Esophagus muscularis mucosa (tissue), 4 donors: ENCODE measurements at regions of chr1 and their contacts with region 1.

Region 1: GRCh38 chr1:174982971-174983689 is 16.6 kb upstream of the CACYBP start:
- DNase-seq: no peak
- H3K4me3 ChIP-seq: no peak overlapping the region
- H3K27ac ChIP-seq: no peak overlapping the region
- H3K4me1 ChIP-seq: no peaks in the 10 kb centered on the region
- H3K27me3 ChIP-seq: no peaks in the 10 kb centered on the region
- CTCF ChIP-seq: peak; percentile 49 to 64 (median 52)
- EP300 ChIP-seq: no peak
- POLR2A ChIP-seq: no peak

Region 2: GRCh38 chr1:174769961-174770549 is 213.1 kb before region 1 on chr1:
- intact Hi-C with region 1: loop called (anchors 5 kb)
- DNase-seq: no peak
- H3K4me3 ChIP-seq: no peak overlapping the region
- H3K27ac ChIP-seq: no peak overlapping the region
- H3K4me1 ChIP-seq: no peaks in the 10 kb centered on the region
- H3K27me3 ChIP-seq: no peaks in the 10 kb centered on the region
- CTCF ChIP-seq: peak; percentile 53 to 62 (median 61)
- EP300 ChIP-seq: no peak
- POLR2A ChIP-seq: no peak

Region 3: GRCh38 chr1:174883409-174883808 is 99.7 kb before region 1 on chr1:
- intact Hi-C with region 1: loop called (anchors 10 kb)
- DNase-seq: no peak
- H3K4me3 ChIP-seq: no peak overlapping the region
- H3K27ac ChIP-seq: no peak overlapping the region
- H3K4me1 ChIP-seq: peaks cover 0 to 10% (median 0%) of the 10 kb centered on the region in 4 donors
- H3K27me3 ChIP-seq: no peaks in the 10 kb centered on the region
- CTCF ChIP-seq: no peak
- EP300 ChIP-seq: no peak
- POLR2A ChIP-seq: no peak

Region 4: GRCh38 chr1:175015243-175015642 is 32.1 kb after region 1 on chr1:
- intact Hi-C with region 1: no loop called
- DNase-seq: no peak
- H3K4me3 ChIP-seq: no peak overlapping the region
- H3K27ac ChIP-seq: no peak overlapping the region
- H3K4me1 ChIP-seq: peaks cover 0 to 4% (median 0%) of the 10 kb centered on the region in 4 donors
- H3K27me3 ChIP-seq: no peaks in the 10 kb centered on the region
- CTCF ChIP-seq: no peak
- EP300 ChIP-seq: no peak
- POLR2A ChIP-seq: no peak

Region 5: GRCh38 chr1:175072099-175072951 is 89.2 kb after region 1 on chr1:
- intact Hi-C with region 1: no loop called
- DNase-seq: peak; percentile 92
- H3K4me3 ChIP-seq: peak overlapping the region; percentile 8 to 21 (median 14)
- H3K27ac ChIP-seq: peak overlapping the region in 2 of 4 donors; percentile 15 to 54
- H3K4me1 ChIP-seq: peaks cover 10 to 24% (median 21%) of the 10 kb centered on the region in 4 donors
- H3K27me3 ChIP-seq: no peaks in the 10 kb centered on the region
- CTCF ChIP-seq: no peak
- EP300 ChIP-seq: no peak
- POLR2A ChIP-seq: no peak